Activated B cell treated with CpG ODN at 0.5 μM for 24 hours (primary cell): ENCODE measurements at regions of chr17 and their contacts with region 1.

Region 1: DNA sequence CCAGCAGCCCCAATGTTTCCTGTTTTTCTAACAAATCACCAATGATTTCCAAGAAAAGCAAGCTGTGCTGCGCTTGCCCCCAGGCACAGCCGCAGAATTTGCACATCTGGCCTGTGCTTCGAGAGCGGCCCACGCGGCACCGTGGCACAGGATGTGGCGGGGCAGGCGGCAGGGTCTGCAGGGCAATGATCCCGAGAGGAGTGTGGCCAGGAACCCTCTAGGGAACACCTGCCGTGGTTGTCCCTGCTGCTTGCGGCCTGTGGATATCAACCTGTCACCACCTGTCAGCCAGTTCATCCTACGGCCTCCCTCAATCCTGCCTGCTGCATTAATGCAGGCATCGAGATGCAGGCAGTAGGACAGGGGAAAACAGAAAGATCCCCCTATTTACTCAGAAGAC is 24.0 kb downstream of the PIK3R5 start:
- DNase-seq: no peak
- ATAC-seq: peak; percentile 57
- H3K4me3 Mint-ChIP-seq: peak overlapping the region; percentile 51
- H3K27ac Mint-ChIP-seq: peak overlapping the region; percentile 73
- H3K4me1 Mint-ChIP-seq: peaks cover 68% of the 10 kb centered on the region
- H3K27me3 Mint-ChIP-seq: no peaks in the 10 kb centered on the region
- CTCF ChIP-seq: no peak

Region 2: GRCh38 chr17:8875957-8876356 is 65.6 kb before region 1 on chr17:
- CTCF ChIA-PET with region 1: no interaction called
- POLR2A ChIA-PET with region 1: no interaction called
- intact Hi-C with region 1: no loop called
- DNase-seq: no peak
- ATAC-seq: no peak
- H3K4me3 Mint-ChIP-seq: no peak overlapping the region
- H3K27ac Mint-ChIP-seq: no peak overlapping the region
- H3K4me1 Mint-ChIP-seq: peaks cover 6% of the 10 kb centered on the region
- H3K27me3 Mint-ChIP-seq: no peaks in the 10 kb centered on the region
- CTCF ChIP-seq: no peak

Region 3: GRCh38 chr17:8888704-8889302 is 52.7 kb before region 1 on chr17:
- CTCF ChIA-PET with region 1: no interaction called
- POLR2A ChIA-PET with region 1: no interaction called
- intact Hi-C with region 1: no loop called
- DNase-seq: no peak
- ATAC-seq: no peak
- H3K4me3 Mint-ChIP-seq: no peak overlapping the region
- H3K27ac Mint-ChIP-seq: no peak overlapping the region
- H3K4me1 Mint-ChIP-seq: peaks cover 9% of the 10 kb centered on the region
- H3K27me3 Mint-ChIP-seq: no peaks in the 10 kb centered on the region
- CTCF ChIP-seq: no peak

Region 4: DNA sequence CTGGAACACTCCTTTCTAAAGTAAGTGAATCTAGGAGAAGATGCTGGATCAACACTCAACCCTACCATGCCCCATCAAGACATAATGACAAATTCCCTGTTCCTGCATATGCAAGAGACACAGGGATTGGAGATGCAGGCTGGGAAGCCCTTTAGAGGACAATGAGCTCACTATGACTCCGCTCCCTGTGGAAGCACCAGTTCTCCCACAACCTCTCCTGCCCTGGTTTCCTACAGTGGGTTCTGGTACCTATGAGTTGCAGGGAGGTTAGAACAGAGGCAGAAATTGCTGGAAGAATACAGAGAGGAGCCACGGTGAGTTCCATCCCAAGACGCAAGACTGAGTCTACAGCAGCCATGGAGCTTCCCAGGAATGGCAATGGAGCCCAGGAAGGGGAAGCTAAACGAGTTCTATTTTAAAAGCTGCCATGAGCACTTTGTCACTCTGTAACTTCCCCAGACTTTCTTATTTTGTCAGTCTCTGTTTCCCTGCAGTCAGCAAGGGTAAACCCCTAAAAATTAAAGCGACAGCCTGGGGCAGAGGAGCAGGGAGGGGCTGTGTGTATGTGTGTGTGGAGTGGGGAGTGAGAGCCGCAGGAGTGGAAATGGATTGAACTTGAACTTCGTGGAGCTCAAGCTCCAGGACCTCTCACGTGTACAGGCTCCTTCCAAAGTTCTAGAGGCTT is 31.8 kb before region 1 on chr17:
- CTCF ChIA-PET with region 1: no interaction called
- POLR2A ChIA-PET with region 1: interaction called, 10 read pairs
- intact Hi-C with region 1: loop called (anchors 2 kb)
- DNase-seq: no peak
- ATAC-seq: no peak
- H3K4me3 Mint-ChIP-seq: peak overlapping the region; percentile 13
- H3K27ac Mint-ChIP-seq: peak overlapping the region; percentile 31
- H3K4me1 Mint-ChIP-seq: peaks cover 46% of the 10 kb centered on the region
- H3K27me3 Mint-ChIP-seq: no peaks in the 10 kb centered on the region
- CTCF ChIP-seq: no peak

Region 5: DNA sequence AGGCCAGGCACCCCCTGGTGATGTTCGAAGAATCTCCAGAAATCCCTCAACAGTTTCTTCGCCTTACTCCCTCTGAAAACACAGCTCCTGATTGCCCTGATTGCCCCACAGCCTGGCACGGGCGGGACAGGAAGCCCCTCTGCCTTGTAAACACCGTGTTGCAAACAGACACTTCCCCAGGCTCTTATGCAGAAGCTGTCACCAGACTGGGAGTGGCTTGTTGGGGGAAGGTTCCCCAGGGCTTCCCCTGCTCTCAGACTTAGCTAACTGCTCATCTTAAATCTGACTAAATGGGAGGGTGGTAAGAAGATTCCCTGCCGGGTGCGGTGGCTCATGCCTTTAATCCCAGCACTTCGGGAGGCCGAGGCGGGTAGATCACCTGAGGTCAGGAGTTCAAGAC is 12.8 kb after region 1 on chr17:
- CTCF ChIA-PET with region 1: no interaction called
- POLR2A ChIA-PET with region 1: interaction called, 21 read pairs
- intact Hi-C with region 1: loop called (anchors 1 kb)
- DNase-seq: peak; percentile 48
- ATAC-seq: peak; percentile 99
- H3K4me3 Mint-ChIP-seq: peak overlapping the region; percentile 70
- H3K27ac Mint-ChIP-seq: peak overlapping the region; percentile 86
- H3K4me1 Mint-ChIP-seq: peaks cover 92% of the 10 kb centered on the region
- H3K27me3 Mint-ChIP-seq: no peaks in the 10 kb centered on the region
- CTCF ChIP-seq: no peak